Panc1 (cell line): ENCODE measurements at regions of chr14 and their contacts with region 1.

Region 1: DNA sequence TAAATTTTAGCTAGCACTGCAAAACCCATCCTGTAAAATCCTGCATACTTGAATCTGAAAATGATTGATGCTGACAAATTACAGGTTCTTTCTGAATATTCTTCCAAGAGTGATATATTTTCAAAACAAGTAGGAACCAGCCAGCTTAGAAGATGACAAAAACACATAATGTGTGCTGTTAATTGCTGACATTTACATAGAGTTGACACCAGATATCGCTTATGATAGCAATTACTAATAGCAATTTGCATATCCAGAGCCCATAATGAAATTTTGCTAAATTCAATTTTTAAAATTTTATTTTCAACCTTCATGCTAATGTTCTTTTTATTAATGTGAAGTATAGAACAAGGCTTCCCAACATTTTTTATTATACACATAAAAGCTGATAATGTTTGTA is 284.5 kb downstream of the SEC23A start:
- DNase-seq: no peak
- ATAC-seq: no peak
- H3K4me3 ChIP-seq: no peak overlapping the region
- H3K27ac ChIP-seq: no peak overlapping the region
- H3K4me1 ChIP-seq: no peaks in the 10 kb centered on the region
- H3K27me3 ChIP-seq: no peaks in the 10 kb centered on the region
- CTCF ChIP-seq: no peak

Region 2: DNA sequence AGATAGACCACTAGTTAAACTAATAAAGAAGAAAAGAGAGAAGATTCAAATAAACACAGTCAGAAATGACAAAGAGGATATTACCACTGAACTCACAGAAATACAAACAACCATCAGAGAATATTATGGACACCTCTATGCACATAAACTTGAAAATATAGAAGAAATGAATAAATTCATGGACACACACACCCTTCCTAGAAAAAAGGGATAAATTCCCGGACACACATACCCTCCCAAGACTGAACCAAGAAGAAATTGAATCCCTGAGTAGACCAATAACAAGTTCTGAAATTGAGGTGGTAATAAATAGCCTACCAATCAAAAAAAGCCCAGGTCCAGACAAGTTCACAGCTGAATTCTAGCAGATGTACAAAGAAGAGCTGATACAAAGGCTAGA is 96.6 kb after region 1 on chr14:
- CTCF ChIA-PET with region 1: no interaction called
- POLR2A ChIA-PET with region 1: no interaction called
- in situ Hi-C with region 1: no loop called
- intact Hi-C with region 1: no loop called
- DNase-seq: no peak
- ATAC-seq: no peak
- H3K4me3 ChIP-seq: no peak overlapping the region
- H3K27ac ChIP-seq: no peak overlapping the region
- H3K4me1 ChIP-seq: no peaks in the 10 kb centered on the region
- H3K27me3 ChIP-seq: no peaks in the 10 kb centered on the region
- CTCF ChIP-seq: no peak

Region 3: GRCh38 chr14:38931969-38932652 is 113.6 kb after region 1 on chr14:
- CTCF ChIA-PET with region 1: no interaction called
- POLR2A ChIA-PET with region 1: no interaction called
- in situ Hi-C with region 1: no loop called
- intact Hi-C with region 1: no loop called
- DNase-seq: no peak
- ATAC-seq: no peak
- H3K4me3 ChIP-seq: no peak overlapping the region
- H3K27ac ChIP-seq: no peak overlapping the region
- H3K4me1 ChIP-seq: no peaks in the 10 kb centered on the region
- H3K27me3 ChIP-seq: no peaks in the 10 kb centered on the region
- CTCF ChIP-seq: no peak

Region 4: GRCh38 chr14:38971255-38971921 is 152.8 kb after region 1 on chr14:
- CTCF ChIA-PET with region 1: no interaction called
- POLR2A ChIA-PET with region 1: no interaction called
- in situ Hi-C with region 1: no loop called
- intact Hi-C with region 1: no loop called
- DNase-seq: no peak
- ATAC-seq: no peak
- H3K4me3 ChIP-seq: no peak overlapping the region
- H3K27ac ChIP-seq: no peak overlapping the region
- H3K4me1 ChIP-seq: no peaks in the 10 kb centered on the region
- H3K27me3 ChIP-seq: no peaks in the 10 kb centered on the region
- CTCF ChIP-seq: no peak

Region 5: DNA sequence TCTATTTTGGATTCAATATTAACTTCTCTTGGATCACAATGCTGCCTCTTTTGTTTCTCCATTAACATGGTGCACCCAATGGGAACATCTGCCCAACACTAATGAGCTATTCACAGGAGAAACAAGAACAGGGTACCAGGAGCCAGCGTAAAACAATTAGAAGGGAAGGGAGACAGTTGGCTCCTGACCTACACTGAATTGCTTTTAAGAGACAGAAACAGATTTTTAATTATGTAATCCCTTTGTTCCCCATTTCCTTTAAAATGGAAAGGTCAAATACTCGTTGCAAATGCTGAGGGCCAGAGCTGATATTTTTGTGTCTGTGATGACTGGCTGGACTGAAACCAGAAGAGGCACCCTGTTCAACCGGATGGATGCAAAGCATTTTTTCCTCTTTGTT is 176.2 kb after region 1 on chr14:
- CTCF ChIA-PET with region 1: no interaction called
- POLR2A ChIA-PET with region 1: interaction called, 14 read pairs
- in situ Hi-C with region 1: no loop called
- intact Hi-C with region 1: no loop called
- DNase-seq: no peak
- ATAC-seq: no peak
- H3K4me3 ChIP-seq: no peak overlapping the region
- H3K27ac ChIP-seq: no peak overlapping the region
- H3K4me1 ChIP-seq: no peaks in the 10 kb centered on the region
- H3K27me3 ChIP-seq: no peaks in the 10 kb centered on the region
- CTCF ChIP-seq: no peak